CD4-positive, alpha-beta T cell (primary cell): ENCODE measurements at regions of chr3 and their contacts with region 1.

Region 1: DNA sequence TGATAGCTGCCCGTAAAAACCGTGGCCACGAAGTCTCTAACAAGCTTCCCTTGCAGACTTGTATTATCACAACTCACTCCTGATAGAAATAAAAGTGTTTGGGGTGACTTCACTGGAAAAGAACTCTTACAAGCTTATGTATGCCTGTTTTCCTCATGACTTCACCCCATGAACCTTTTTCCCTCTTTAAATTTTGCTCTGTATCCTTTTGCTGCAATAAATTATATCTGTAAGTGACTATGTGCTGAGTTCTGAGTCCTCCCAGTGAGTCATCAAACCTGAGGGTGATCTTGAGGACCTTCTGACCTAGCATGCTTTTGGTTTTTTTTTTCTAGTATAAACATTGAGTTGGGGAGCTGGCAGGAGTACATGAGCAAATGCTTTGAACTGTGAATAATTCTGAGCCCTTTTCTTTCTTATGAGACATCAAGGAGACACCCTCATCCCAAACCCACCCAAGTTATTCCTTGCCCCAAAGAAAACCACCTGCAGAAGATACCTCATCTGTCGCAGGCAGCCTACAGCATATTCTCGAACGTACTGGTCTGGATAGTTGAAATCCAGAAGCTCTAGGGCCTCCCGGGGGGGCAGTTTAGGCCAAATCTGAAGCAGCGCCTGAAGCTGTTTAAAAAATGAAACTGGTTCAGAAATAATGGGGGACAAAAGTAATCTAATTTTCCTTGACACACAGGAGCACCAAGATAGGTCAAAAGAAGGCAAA is 85.9 kb downstream of the FAIM start:
- DNase-seq: no peak
- ATAC-seq: no peak
- H3K4me3 ChIP-seq: no peak overlapping the region
- H3K4me3 Mint-ChIP-seq: no peak overlapping the region
- H3K27ac ChIP-seq: no peak overlapping the region
- H3K27ac Mint-ChIP-seq: no peak overlapping the region
- H3K4me1 ChIP-seq: no peaks in the 10 kb centered on the region
- H3K4me1 Mint-ChIP-seq: no peaks in the 10 kb centered on the region
- H3K27me3 ChIP-seq: no peaks in the 10 kb centered on the region
- H3K27me3 Mint-ChIP-seq: no peaks in the 10 kb centered on the region
- CTCF ChIP-seq: no peak

Region 2: GRCh38 chr3:138284957-138285477 is 409.4 kb before region 1 on chr3:
- CTCF ChIA-PET with region 1: no interaction called
- POLR2A ChIA-PET with region 1: no interaction called
- intact Hi-C with region 1: no loop called
- DNase-seq: no peak
- ATAC-seq: no peak
- H3K4me3 ChIP-seq: no peak overlapping the region
- H3K4me3 Mint-ChIP-seq: no peak overlapping the region
- H3K27ac ChIP-seq: no peak overlapping the region
- H3K27ac Mint-ChIP-seq: no peak overlapping the region
- H3K4me1 ChIP-seq: no peaks in the 10 kb centered on the region
- H3K4me1 Mint-ChIP-seq: peaks cover 4% of the 10 kb centered on the region
- H3K27me3 ChIP-seq: no peaks in the 10 kb centered on the region
- H3K27me3 Mint-ChIP-seq: no peaks in the 10 kb centered on the region
- CTCF ChIP-seq: no peak

Region 3: GRCh38 chr3:138417559-138417982 is 276.9 kb before region 1 on chr3:
- CTCF ChIA-PET with region 1: no interaction called
- POLR2A ChIA-PET with region 1: no interaction called
- intact Hi-C with region 1: loop called in 1 of 2 experiments (anchors 10 kb)
- DNase-seq: peak; percentile 38 to 76 (median 49)
- ATAC-seq: peak; percentile 69
- H3K4me3 ChIP-seq: no peak overlapping the region
- H3K4me3 Mint-ChIP-seq: no peak overlapping the region
- H3K27ac ChIP-seq: no peak overlapping the region
- H3K27ac Mint-ChIP-seq: no peak overlapping the region
- H3K4me1 ChIP-seq: no peaks in the 10 kb centered on the region
- H3K4me1 Mint-ChIP-seq: no peaks in the 10 kb centered on the region
- H3K27me3 ChIP-seq: no peaks in the 10 kb centered on the region
- H3K27me3 Mint-ChIP-seq: peaks cover 22% of the 10 kb centered on the region
- CTCF ChIP-seq: peak; percentile 90

Region 4: DNA sequence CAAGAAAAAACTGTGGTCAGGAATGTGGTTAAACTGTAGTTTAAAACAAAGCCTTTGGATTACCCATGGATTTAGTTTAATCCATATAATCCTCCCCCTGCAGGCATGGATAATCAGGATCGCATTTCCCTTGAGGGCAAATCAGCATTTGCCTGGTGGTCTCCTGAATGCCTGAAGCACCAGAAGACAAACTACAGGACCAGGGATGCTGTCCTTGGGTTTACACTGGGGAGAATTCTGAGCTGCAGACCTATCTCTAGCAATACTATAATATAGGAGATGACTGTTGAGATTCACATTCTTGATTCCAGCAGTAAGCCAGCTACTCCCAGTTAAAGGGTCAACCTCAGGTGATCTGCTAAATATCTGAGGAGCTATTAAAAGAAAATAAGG is 129.7 kb after region 1 on chr3:
- CTCF ChIA-PET with region 1: no interaction called
- POLR2A ChIA-PET with region 1: no interaction called
- intact Hi-C with region 1: no loop called
- DNase-seq: no peak
- ATAC-seq: no peak
- H3K4me3 ChIP-seq: no peak overlapping the region
- H3K4me3 Mint-ChIP-seq: no peak overlapping the region
- H3K27ac ChIP-seq: no peak overlapping the region
- H3K27ac Mint-ChIP-seq: no peak overlapping the region
- H3K4me1 ChIP-seq: peaks cover under 1% of the 10 kb centered on the region
- H3K4me1 Mint-ChIP-seq: peaks cover 26% of the 10 kb centered on the region
- H3K27me3 ChIP-seq: no peaks in the 10 kb centered on the region
- H3K27me3 Mint-ChIP-seq: no peaks in the 10 kb centered on the region
- CTCF ChIP-seq: no peak